ENCODE measurements at regions of chr3 and their contacts with region 1.

Region 1: GRCh38 chr3:183116025-183116614 is 16.8 kb upstream of the MCCC1 start:
- DNase-seq: peak; percentile 43 to 85 (median 72)
- H3K4me3 ChIP-seq: peak overlapping the region in 56 of 59 donors; percentile 8 to 63 (median 44)
- H3K27ac ChIP-seq: peak overlapping the region in 26 of 59 donors; percentile 10 to 77 (median 49)
- H3K27me3 ChIP-seq: peaks cover 0 to 18% (median 0%) of the 10 kb centered on the region in 45 donors
- CTCF ChIP-seq: no peak

Region 2: GRCh38 chr3:182713743-182714517 is 402.2 kb before region 1 on chr3:
- intact Hi-C with region 1: loop called in 1 of 2 experiments (anchors 10 kb)
- DNase-seq: no peak
- H3K4me3 ChIP-seq: no peak overlapping the region
- H3K27ac ChIP-seq: no peak overlapping the region
- H3K27me3 ChIP-seq: peaks cover 0 to 3% (median 0%) of the 10 kb centered on the region in 45 donors
- CTCF ChIP-seq: peak; percentile 43 to 83 (median 65)

Region 3: GRCh38 chr3:182909318-182910040 is 206.6 kb before region 1 on chr3:
- intact Hi-C with region 1: no loop called
- DNase-seq: peak in 2 of 10 donors; percentile 32 to 47
- H3K4me3 ChIP-seq: no peak overlapping the region
- H3K27ac ChIP-seq: peak overlapping the region in 15 of 59 donors; percentile 4 to 49 (median 28)
- H3K27me3 ChIP-seq: no peaks in the 10 kb centered on the region
- CTCF ChIP-seq: peak in 55 of 56 donors; percentile 26 to 71 (median 56)

Measured in dorsolateral prefrontal cortex (tissue), 120 donors.